ENCODE measurements at regions of chr11 and their contacts with region 1.

Region 1: GRCh38 chr11:63986156-63986931 is at the start of gene OTUB1:
- DNase-seq: peak; percentile 61 to 93 (median 86)
- ATAC-seq: peak; percentile 85
- H3K4me3 ChIP-seq: peak within 1 kb of the TSS; percentile 65 to 93
- H3K4me3 Mint-ChIP-seq: peak within 1 kb of the TSS; percentile 98
- H3K27ac ChIP-seq: peak within 1 kb of the TSS; percentile 83 to 94
- H3K27ac Mint-ChIP-seq: peak within 1 kb of the TSS; percentile 97
- H3K4me1 ChIP-seq: peaks cover 22% of the 10 kb centered on the region
- H3K4me1 Mint-ChIP-seq: peaks cover 28% of the 10 kb centered on the region
- H3K27me3 ChIP-seq: no peaks in the 10 kb centered on the region
- H3K27me3 Mint-ChIP-seq: no peaks in the 10 kb centered on the region
- CTCF ChIP-seq: no peak
- total RNA-seq, gene OTUB1: 67.2 to 68.7 TPM

Region 2: GRCh38 chr11:63671322-63672155 is 314.8 kb before region 1 on chr11 and contains the start of gene ATL3:
- CTCF ChIA-PET with region 1: no interaction called
- POLR2A ChIA-PET with region 1: no interaction called
- intact Hi-C with region 1: no loop called
- DNase-seq: peak; percentile 87 to 98 (median 96)
- ATAC-seq: peak; percentile 95
- H3K4me3 ChIP-seq: peak within 1 kb of the TSS; percentile 79 to 91
- H3K4me3 Mint-ChIP-seq: peak within 1 kb of the TSS; percentile 86
- H3K27ac ChIP-seq: peak within 1 kb of the TSS; percentile 65 to 74
- H3K27ac Mint-ChIP-seq: peak within 1 kb of the TSS; percentile 87
- H3K4me1 ChIP-seq: peaks cover 19% of the 10 kb centered on the region
- H3K4me1 Mint-ChIP-seq: peaks cover 29% of the 10 kb centered on the region
- H3K27me3 ChIP-seq: no peaks in the 10 kb centered on the region
- H3K27me3 Mint-ChIP-seq: no peaks in the 10 kb centered on the region
- CTCF ChIP-seq: no peak
- total RNA-seq, gene ATL3: 11.6 to 11.8 TPM

Region 3: DNA sequence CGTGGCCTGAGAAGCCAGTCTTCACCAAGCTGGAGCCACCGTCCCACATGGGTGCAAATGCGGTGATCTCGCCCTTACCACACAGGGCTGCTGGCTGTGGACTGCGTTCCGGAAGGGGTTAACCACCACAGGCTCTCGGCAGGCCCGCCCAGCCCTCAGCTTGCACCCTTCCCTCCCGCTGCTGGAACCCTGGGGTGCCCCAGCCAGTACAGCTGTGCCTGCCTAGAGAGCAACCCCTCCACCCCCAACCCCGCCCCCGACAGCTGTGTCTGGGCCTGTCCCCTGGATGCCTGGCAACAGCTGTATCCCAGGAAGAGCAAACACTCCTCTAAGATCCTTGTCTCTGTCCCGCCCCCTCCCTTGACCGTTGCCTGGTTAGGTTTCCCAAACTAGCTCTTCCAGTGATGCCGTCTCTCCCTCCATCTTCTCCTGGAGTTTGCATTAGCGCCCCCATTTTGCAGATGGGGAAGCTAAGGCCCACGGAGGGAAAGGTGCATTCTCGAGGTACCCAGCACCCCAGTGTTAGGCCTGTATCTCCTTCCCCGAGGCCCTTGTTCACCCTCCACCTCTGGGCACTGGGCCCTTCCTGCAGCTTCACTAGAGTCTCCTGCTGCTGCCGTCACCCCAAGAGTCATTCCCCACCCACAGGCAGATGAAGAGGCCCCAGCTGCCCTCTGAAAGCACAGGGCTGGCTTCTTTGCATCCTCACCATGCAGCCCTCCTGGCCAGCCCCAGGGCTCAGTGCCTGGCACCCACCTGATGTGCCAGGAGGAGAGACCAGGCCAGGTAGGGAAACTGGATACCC is 24.5 kb before region 1 on chr11:
- CTCF ChIA-PET with region 1: no interaction called
- POLR2A ChIA-PET with region 1: no interaction called
- intact Hi-C with region 1: no loop called
- DNase-seq: peak in 3 of 9 experiments; percentile 10 to 63 (median 59)
- ATAC-seq: peak; percentile 49
- H3K4me3 ChIP-seq: no peak overlapping the region
- H3K4me3 Mint-ChIP-seq: no peak overlapping the region
- H3K27ac ChIP-seq: no peak overlapping the region
- H3K27ac Mint-ChIP-seq: no peak overlapping the region
- H3K4me1 ChIP-seq: peaks cover 9% of the 10 kb centered on the region
- H3K4me1 Mint-ChIP-seq: peaks cover 12% of the 10 kb centered on the region
- H3K27me3 ChIP-seq: no peaks in the 10 kb centered on the region
- H3K27me3 Mint-ChIP-seq: no peaks in the 10 kb centered on the region
- CTCF ChIP-seq: no peak

Region 4: DNA sequence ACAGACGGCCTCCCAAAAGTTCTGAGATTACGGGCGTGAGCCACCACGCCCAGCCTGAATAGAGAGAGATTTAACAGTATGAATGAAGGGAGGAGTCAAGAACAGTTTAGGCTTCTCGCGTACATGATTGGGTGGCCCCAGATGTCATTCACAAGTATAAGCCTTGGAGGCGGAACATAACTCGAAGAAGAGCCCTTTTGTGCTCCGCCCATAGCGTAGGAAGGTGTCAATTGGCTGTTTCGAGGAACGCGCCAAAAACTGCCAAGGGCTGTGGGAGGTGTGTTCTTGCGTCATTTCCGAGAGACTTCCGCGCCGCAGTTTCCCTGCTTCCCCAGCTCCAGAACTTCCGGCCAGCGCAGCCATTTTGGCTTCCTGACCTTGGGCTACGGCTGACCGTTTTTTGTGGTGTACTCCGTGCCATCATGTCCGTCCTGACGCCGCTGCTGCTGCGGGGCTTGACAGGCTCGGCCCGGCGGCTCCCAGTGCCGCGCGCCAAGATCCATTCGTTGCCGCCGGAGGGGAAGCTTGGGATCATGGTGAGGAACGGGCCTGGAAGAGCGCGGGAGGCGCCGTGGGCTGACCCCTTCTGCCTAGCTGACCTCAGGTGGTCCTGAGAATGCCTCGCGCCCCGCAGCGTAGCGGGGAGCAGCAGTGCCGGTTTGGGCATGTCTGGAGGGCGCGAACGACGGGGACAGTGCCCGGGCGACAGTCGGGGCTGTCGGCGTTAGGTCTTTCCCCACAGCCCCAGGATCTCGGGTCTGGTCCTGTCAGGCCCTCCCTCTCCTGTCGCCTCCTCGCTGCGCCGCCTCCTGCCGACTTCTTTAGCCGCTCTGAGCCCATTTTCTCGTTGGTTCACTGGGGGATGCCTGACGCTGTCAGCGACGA is 11.8 kb before region 1 on chr11 and contains the start of gene COX8A:
- CTCF ChIA-PET with region 1: no interaction called
- POLR2A ChIA-PET with region 1: interaction called, 4 read pairs
- intact Hi-C with region 1: loop called (anchors 1 kb)
- DNase-seq: peak; percentile 89 to 100 (median 90)
- ATAC-seq: peak; percentile 99
- H3K4me3 ChIP-seq: peak within 1 kb of the TSS; percentile 97 to 99
- H3K4me3 Mint-ChIP-seq: peak within 1 kb of the TSS; percentile 100
- H3K27ac ChIP-seq: peak within 1 kb of the TSS; percentile 86 to 97
- H3K27ac Mint-ChIP-seq: peak within 1 kb of the TSS; percentile 99
- H3K4me1 ChIP-seq: peaks cover 16% of the 10 kb centered on the region
- H3K4me1 Mint-ChIP-seq: peaks cover 30% of the 10 kb centered on the region
- H3K27me3 ChIP-seq: no peaks in the 10 kb centered on the region
- H3K27me3 Mint-ChIP-seq: peaks cover 3% of the 10 kb centered on the region
- CTCF ChIP-seq: no peak
- total RNA-seq, gene COX8A: 97.6 to 111 TPM

Region 5: GRCh38 chr11:64000026-64000739 is 13.8 kb after region 1 on chr11:
- CTCF ChIA-PET with region 1: interaction called, 13 read pairs
- POLR2A ChIA-PET with region 1: interaction called, 3 read pairs
- intact Hi-C with region 1: loop called in 1 of 2 experiments (anchors 1 kb)
- DNase-seq: peak; percentile 45 to 88 (median 70)
- ATAC-seq: peak; percentile 79
- H3K4me3 ChIP-seq: peak overlapping the region; percentile 24 to 33
- H3K4me3 Mint-ChIP-seq: peak overlapping the region; percentile 56
- H3K27ac ChIP-seq: no peak overlapping the region
- H3K27ac Mint-ChIP-seq: no peak overlapping the region
- H3K4me1 ChIP-seq: peaks cover 17% of the 10 kb centered on the region
- H3K4me1 Mint-ChIP-seq: peaks cover 9% of the 10 kb centered on the region
- H3K27me3 ChIP-seq: no peaks in the 10 kb centered on the region
- H3K27me3 Mint-ChIP-seq: peaks cover 2% of the 10 kb centered on the region
- CTCF ChIP-seq: peak; percentile 82

Region 6: GRCh38 chr11:64240394-64241174 is 254.2 kb after region 1 on chr11 and contains the start of gene FKBP2:
- CTCF ChIA-PET with region 1: no interaction called
- POLR2A ChIA-PET with region 1: no interaction called
- intact Hi-C with region 1: loop called in 1 of 2 experiments (anchors 10 kb)
- DNase-seq: peak; percentile 94 to 100 (median 97)
- ATAC-seq: peak; percentile 63
- H3K4me3 ChIP-seq: peak within 1 kb of the TSS; percentile 80 to 97
- H3K4me3 Mint-ChIP-seq: peak within 1 kb of the TSS; percentile 90
- H3K27ac ChIP-seq: peak within 1 kb of the TSS; percentile 94 to 99
- H3K27ac Mint-ChIP-seq: peak within 1 kb of the TSS; percentile 100
- H3K4me1 ChIP-seq: peaks cover 29% of the 10 kb centered on the region
- H3K4me1 Mint-ChIP-seq: peaks cover 34% of the 10 kb centered on the region
- H3K27me3 ChIP-seq: no peaks in the 10 kb centered on the region
- H3K27me3 Mint-ChIP-seq: no peaks in the 10 kb centered on the region
- CTCF ChIP-seq: no peak
- total RNA-seq, gene FKBP2: 19.4 TPM

Region 7: DNA sequence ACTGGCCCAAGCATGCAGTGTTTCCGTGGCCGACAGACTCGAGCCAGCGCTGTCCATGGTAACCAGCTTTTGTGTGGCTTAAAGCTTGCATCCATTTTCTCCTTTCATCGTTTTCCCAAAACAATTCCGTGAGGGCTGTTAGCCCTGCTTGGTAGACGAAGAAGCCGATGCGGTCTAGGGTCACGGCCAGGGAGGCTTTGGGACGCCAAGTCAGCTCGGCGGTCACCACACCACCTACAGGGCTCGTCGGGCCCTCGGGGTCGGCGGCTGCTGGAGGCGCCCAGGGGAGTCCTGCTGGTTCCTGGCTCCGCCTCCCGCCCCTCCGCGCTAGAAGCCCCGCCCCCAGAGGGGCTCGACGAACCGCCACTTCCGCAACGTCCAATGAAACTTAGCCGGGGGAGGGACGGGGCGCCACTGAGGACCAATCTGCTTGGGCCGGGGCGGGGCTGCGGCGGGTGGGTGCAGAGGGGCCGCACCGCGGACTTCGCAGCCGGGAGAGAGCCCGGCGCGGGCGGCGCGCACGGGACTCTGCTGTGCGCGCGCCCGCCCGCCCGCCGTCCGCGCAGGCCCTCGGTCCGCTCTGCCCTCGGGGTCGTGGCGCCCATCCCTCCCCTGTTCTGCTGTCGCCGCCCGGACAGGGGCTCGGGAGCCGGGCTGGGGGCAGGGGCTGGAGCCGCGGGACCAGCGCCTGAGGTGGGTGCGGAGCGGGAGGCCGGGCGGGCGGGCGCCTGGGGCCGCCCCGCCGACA is 1368.1 kb after region 1 on chr11 and contains the start of gene TIGD3:
- CTCF ChIA-PET with region 1: no interaction called
- POLR2A ChIA-PET with region 1: no interaction called
- intact Hi-C with region 1: no loop called
- DNase-seq: peak; percentile 94 to 99 (median 98)
- ATAC-seq: peak; percentile 97
- H3K4me3 ChIP-seq: peak within 1 kb of the TSS; percentile 49 to 51
- H3K4me3 Mint-ChIP-seq: peak within 1 kb of the TSS; percentile 91
- H3K27ac ChIP-seq: peak within 1 kb of the TSS in 1 of 2 experiments; percentile 58
- H3K27ac Mint-ChIP-seq: peak within 1 kb of the TSS; percentile 81
- H3K4me1 ChIP-seq: peaks cover 6% of the 10 kb centered on the region
- H3K4me1 Mint-ChIP-seq: peaks cover 13% of the 10 kb centered on the region
- H3K27me3 ChIP-seq: no peaks in the 10 kb centered on the region
- H3K27me3 Mint-ChIP-seq: no peaks in the 10 kb centered on the region
- CTCF ChIP-seq: no peak
- total RNA-seq, gene TIGD3: 0.35 to 0.75 TPM

Measured in CD8-positive, alpha-beta T cell (primary cell).